GM12878 (cell line): ENCODE measurements at regions of chr6 and their contacts with region 1.

Region 1: DNA sequence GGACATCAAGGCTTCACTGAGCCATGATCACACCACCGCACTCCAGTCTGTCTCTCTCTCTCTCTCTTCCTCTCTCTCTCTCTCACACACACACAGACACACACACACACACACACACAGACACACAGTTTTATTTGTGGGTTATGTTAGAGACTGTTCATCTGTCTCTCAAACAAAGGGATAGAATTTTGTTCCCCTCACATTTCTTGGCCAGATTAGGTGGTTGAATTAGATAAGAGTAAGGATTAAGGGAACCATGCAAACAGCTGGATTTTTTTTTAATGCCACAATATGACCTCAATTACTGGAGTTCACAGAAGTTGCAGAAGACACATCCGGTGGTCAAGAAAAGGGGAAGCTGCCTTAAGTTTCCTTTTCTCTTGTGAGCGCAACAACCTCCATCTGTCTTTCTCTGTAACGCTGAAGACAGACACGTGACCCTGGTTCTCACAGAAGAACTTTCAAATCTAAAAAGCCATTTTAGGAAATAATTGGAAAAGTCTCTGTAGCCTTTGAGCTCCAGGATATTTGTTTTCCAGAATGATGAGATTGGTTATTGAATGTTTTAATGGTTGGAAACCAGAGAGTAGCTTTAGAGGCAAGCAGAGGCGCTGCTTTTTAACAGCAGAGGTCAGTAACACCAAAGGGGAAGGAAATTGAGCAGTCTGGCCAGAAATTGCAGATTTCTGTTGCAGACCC is 33.0 kb upstream of the LGSN start:
- DNase-seq: peak; percentile 88
- ATAC-seq: peak; percentile 94
- H3K4me3 ChIP-seq: peak overlapping the region; percentile 56
- H3K27ac ChIP-seq: peak overlapping the region; percentile 95
- H3K4me1 ChIP-seq: peaks cover 11% of the 10 kb centered on the region
- H3K27me3 ChIP-seq: no peaks in the 10 kb centered on the region
- CTCF ChIP-seq: peak; percentile 62 to 90 (median 82)
- EP300 ChIP-seq: peak; percentile 89 to 93
- POLR2A ChIP-seq: no peak
- RAD21 ChIP-seq: peak; percentile 98

Region 2: DNA sequence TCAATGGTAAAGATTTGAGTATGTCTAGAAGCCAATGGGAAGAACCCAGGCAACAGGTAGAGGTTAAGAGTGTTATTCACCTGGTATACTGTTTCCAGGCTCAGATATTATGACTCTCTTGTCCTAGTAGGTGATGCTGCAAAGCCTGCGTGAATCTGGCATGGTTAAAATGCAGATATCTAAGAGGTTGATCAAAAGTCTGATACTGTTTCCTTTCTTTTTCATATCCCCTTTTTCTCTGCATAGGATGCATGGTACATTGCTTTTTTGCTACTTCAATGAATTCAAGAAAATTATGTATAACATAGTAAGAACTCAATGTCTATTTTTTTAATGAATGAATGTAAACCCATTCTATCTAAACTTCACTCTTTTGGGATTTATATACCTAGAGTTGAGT is 782.4 kb before region 1 on chr6:
- CTCF ChIA-PET with region 1: no interaction called
- POLR2A ChIA-PET with region 1: no interaction called
- RAD21 ChIA-PET with region 1: no interaction called
- SMC1A ChIA-PET with region 1: no interaction called
- in situ Hi-C with region 1: no loop called
- intact Hi-C with region 1: no loop called
- DNase-seq: no peak
- ATAC-seq: no peak
- H3K4me3 ChIP-seq: no peak overlapping the region
- H3K27ac ChIP-seq: no peak overlapping the region
- H3K4me1 ChIP-seq: no peaks in the 10 kb centered on the region
- H3K27me3 ChIP-seq: no peaks in the 10 kb centered on the region
- CTCF ChIP-seq: no peak
- EP300 ChIP-seq: no peak
- POLR2A ChIP-seq: no peak
- RAD21 ChIP-seq: no peak

Region 3: DNA sequence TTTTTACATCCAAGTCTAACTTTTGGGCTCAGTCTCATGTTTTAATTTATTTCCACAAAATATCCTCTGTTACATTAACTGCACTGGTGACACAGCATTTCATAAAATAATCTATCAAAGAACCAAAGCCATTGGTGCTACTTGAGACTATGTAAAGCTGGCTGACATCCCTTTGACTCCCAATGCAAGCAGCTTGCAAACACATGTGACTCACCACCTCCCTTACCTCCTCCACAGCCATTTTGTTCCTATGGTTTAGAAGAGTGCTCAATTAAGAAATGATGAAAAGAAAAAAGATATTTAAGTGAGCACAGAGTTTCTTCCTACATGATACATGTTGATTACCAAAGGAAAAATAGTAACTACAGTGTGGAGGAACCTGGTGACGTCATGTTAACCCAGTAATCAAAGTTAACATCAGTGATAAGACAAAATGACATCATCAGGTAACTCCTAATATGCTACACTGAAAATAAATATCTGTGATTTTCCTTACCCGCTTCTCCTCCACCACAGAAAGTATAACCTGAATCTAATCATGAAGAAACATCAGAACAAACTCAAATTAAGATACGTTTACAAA is 20.3 kb after region 1 on chr6:
- CTCF ChIA-PET with region 1: interaction called, 8 read pairs
- POLR2A ChIA-PET with region 1: no interaction called
- RAD21 ChIA-PET with region 1: interaction called, 12 read pairs
- SMC1A ChIA-PET with region 1: interaction called, 5 read pairs
- in situ Hi-C with region 1: no loop called
- intact Hi-C with region 1: no loop called
- DNase-seq: no peak
- ATAC-seq: no peak
- H3K4me3 ChIP-seq: no peak overlapping the region
- H3K27ac ChIP-seq: no peak overlapping the region
- H3K4me1 ChIP-seq: 0 out of 2 replicates have a peak, but pooled peaks cover 3% of the 10 kb centered on the region
- H3K27me3 ChIP-seq: no peaks in the 10 kb centered on the region
- CTCF ChIP-seq: no peak
- EP300 ChIP-seq: no peak
- POLR2A ChIP-seq: no peak
- RAD21 ChIP-seq: no peak

Region 4: GRCh38 chr6:63516186-63516944 is 163.6 kb after region 1 on chr6:
- CTCF ChIA-PET with region 1: interaction called, 24 read pairs
- POLR2A ChIA-PET with region 1: no interaction called
- RAD21 ChIA-PET with region 1: interaction called, 15 read pairs
- SMC1A ChIA-PET with region 1: interaction called, 30 read pairs
- in situ Hi-C with region 1: no loop called
- intact Hi-C with region 1: loop called (anchors 1 kb)
- DNase-seq: no peak
- ATAC-seq: no peak
- H3K4me3 ChIP-seq: no peak overlapping the region
- H3K27ac ChIP-seq: no peak overlapping the region
- H3K4me1 ChIP-seq: peaks cover 18% of the 10 kb centered on the region
- H3K27me3 ChIP-seq: no peaks in the 10 kb centered on the region
- CTCF ChIP-seq: no peak
- EP300 ChIP-seq: no peak
- POLR2A ChIP-seq: no peak
- RAD21 ChIP-seq: no peak

Region 5: GRCh38 chr6:63565058-63565726 is 212.5 kb after region 1 on chr6:
- CTCF ChIA-PET with region 1: interaction called, 4 read pairs
- POLR2A ChIA-PET with region 1: interaction called, 4 read pairs
- RAD21 ChIA-PET with region 1: interaction called, 14 read pairs
- SMC1A ChIA-PET with region 1: interaction called, 7 read pairs
- in situ Hi-C with region 1: loop called (anchors 5 kb)
- intact Hi-C with region 1: no loop called
- DNase-seq: no peak
- ATAC-seq: no peak
- H3K4me3 ChIP-seq: no peak overlapping the region
- H3K27ac ChIP-seq: no peak overlapping the region
- H3K4me1 ChIP-seq: no peaks in the 10 kb centered on the region
- H3K27me3 ChIP-seq: no peaks in the 10 kb centered on the region
- CTCF ChIP-seq: no peak
- EP300 ChIP-seq: no peak
- POLR2A ChIP-seq: no peak
- RAD21 ChIP-seq: no peak

Region 6: GRCh38 chr6:63598049-63599036 is 245.6 kb after region 1 on chr6:
- CTCF ChIA-PET with region 1: interaction called, 118 read pairs
- POLR2A ChIA-PET with region 1: interaction called, 8 read pairs
- RAD21 ChIA-PET with region 1: interaction called, 69 read pairs
- SMC1A ChIA-PET with region 1: interaction called, 95 read pairs
- in situ Hi-C with region 1: loop called (anchors 5 kb)
- intact Hi-C with region 1: loop called (anchors 1 kb)
- DNase-seq: peak; percentile 57
- ATAC-seq: peak; percentile 100
- H3K4me3 ChIP-seq: peak overlapping the region; percentile 74
- H3K27ac ChIP-seq: peak overlapping the region; percentile 56
- H3K4me1 ChIP-seq: peaks cover 6% of the 10 kb centered on the region
- H3K27me3 ChIP-seq: no peaks in the 10 kb centered on the region
- CTCF ChIP-seq: peak; percentile 88 to 94 (median 93); a peak in 5 of 6 replicates
- EP300 ChIP-seq: no peak
- POLR2A ChIP-seq: 0 out of 2 replicates have a peak, but pooled peaks have one; percentile 41
- RAD21 ChIP-seq: peak; percentile 87

Region 7: DNA sequence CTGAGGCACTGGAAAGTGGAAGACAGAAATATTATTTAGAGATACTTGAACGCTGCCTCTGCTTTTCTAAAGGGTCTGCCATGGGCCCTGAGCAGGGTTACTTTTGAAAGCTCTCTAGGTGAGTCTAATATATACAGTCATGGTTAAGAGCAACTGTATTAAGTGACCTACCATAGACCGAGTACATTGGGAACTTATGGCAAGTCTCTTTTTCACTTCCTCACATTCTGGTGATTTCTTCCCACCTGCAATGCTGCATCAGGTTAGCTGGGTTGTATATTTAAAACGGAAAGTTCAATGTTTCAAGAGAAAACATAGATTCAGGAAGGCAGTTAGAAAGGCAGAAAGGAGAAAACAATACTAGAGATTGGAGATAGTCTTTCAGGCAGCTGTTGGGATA is 437.6 kb after region 1 on chr6:
- CTCF ChIA-PET with region 1: interaction called, 6 read pairs
- POLR2A ChIA-PET with region 1: no interaction called
- RAD21 ChIA-PET with region 1: interaction called, 12 read pairs
- SMC1A ChIA-PET with region 1: interaction called, 6 read pairs
- in situ Hi-C with region 1: no loop called
- intact Hi-C with region 1: no loop called
- DNase-seq: no peak
- ATAC-seq: peak; percentile 70
- H3K4me3 ChIP-seq: no peak overlapping the region
- H3K27ac ChIP-seq: no peak overlapping the region
- H3K4me1 ChIP-seq: peaks cover 6% of the 10 kb centered on the region; the same call in 1 of the 2 replicates
- H3K27me3 ChIP-seq: no peaks in the 10 kb centered on the region; a peak in 1 of 4 replicates
- CTCF ChIP-seq: no peak
- EP300 ChIP-seq: no peak
- POLR2A ChIP-seq: no peak
- RAD21 ChIP-seq: no peak